ENCODE measurements at regions of chr12 and their contacts with region 1.

Region 1: GRCh38 chr12:107093417-107094182 is at the start of gene CRY1:
- DNase-seq: peak; percentile 84
- ATAC-seq: peak; percentile 83
- H3K4me3 Mint-ChIP-seq: no peak within 1 kb of the TSS
- H3K27ac Mint-ChIP-seq: no peak within 1 kb of the TSS
- H3K4me1 Mint-ChIP-seq: peaks cover 6% of the 10 kb centered on the region
- H3K27me3 Mint-ChIP-seq: peaks cover 8% of the 10 kb centered on the region
- CTCF ChIP-seq: no peak
- total RNA-seq, gene CRY1: 4.6 and 7.1 TPM in 2 replicates

Region 2: DNA sequence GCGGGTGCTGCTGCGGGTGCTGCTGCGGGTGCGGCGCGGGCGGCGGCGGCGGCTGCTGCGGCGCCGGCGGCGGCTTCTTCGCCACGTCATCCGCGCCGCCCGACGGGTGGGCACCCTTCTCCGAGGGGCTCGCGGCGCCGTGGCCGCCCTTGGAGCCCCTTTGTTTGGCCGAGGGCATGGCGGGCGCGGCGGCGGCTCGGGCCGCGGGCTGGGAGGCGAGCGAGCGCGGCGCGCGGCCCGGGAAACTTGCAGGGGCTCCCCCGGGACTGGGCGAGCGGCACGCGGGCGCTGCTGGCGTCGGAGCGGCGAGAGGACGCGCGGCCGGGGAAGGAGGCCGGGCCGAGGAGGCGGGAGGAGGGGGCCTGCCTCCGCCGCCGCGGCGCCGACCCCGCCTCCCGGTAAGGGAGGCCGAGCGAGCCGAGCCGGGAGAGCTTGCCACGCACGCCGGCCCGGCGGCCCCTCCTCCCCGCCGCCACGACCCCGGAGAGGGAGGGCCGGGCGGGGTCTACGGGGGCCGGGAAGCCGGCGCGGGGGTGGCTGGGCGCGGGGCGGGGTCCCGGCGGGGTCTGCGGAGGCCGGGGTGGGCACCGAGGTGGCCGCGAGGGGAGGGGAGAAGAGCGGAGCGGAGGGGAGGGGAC is 845.8 kb before region 1 on chr12 and contains the start of gene CKAP4:
- CTCF ChIA-PET with region 1: no interaction called
- POLR2A ChIA-PET with region 1: no interaction called
- intact Hi-C with region 1: loop called (anchors 2 kb)
- DNase-seq: peak; percentile 73
- ATAC-seq: peak; percentile 71
- H3K4me3 Mint-ChIP-seq: peak within 1 kb of the TSS; percentile 82
- H3K27ac Mint-ChIP-seq: peak within 1 kb of the TSS; percentile 80
- H3K4me1 Mint-ChIP-seq: peaks cover 54% of the 10 kb centered on the region
- H3K27me3 Mint-ChIP-seq: no peaks in the 10 kb centered on the region
- CTCF ChIP-seq: no peak
- total RNA-seq, gene CKAP4: 15.9 and 17.1 TPM in 2 replicates

Region 3: DNA sequence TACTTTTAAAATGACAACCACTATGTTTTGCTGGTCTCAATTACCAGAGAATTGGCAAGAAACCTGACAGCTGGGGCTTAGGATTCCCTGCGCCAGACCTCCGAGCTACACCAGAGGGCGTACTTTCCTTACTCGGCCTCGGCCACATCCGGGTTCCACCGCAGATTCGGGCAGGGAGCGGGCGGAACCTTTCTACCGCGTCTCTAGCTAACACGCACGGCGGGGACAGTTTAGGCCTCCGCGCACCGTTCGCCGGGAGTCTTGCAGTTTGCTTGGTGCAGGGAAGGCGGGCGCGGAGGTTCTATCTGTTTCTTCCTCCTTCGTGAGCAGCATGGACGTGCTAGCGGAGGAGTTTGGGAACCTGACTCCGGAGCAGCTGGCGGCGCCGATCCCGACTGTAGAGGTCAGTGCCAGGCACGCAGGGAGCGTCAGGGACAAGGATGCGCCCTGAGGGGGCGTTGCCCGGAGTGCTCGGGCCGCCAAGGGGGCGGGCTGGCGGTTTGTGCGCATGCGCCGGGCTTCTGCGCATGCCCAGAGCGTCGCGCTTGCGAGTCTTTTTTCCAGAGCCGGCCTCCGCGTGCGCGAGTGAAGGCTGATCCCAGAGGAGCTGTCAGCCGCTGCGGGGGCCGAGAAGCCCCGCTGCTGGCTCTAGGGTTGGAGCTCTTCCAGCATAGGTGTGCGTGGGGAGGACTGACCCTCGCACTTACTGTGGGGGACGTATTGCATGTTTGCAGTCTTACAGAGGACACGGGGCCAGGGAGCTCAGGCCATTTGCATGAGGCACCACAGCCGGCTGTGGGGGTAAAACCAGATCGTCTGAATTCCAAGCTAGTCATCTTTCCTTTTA is 735.8 kb before region 1 on chr12 and contains the start of gene POLR3B:
- CTCF ChIA-PET with region 1: no interaction called
- POLR2A ChIA-PET with region 1: interaction called, 3 read pairs
- intact Hi-C with region 1: loop called (anchors 1 kb)
- DNase-seq: peak; percentile 96
- ATAC-seq: peak; percentile 92
- H3K4me3 Mint-ChIP-seq: peak within 1 kb of the TSS; percentile 95
- H3K27ac Mint-ChIP-seq: peak within 1 kb of the TSS; percentile 92
- H3K4me1 Mint-ChIP-seq: peaks cover 16% of the 10 kb centered on the region
- H3K27me3 Mint-ChIP-seq: no peaks in the 10 kb centered on the region
- CTCF ChIP-seq: peak; percentile 49
- total RNA-seq, gene POLR3B: 7.3 and 8.0 TPM in 2 replicates

Region 4: GRCh38 chr12:106955377-106956047 is 138.1 kb before region 1 on chr12 and contains the start of gene TMEM263:
- CTCF ChIA-PET with region 1: no interaction called
- POLR2A ChIA-PET with region 1: interaction called, 6 read pairs
- intact Hi-C with region 1: loop called (anchors 1 kb)
- DNase-seq: peak; percentile 91
- ATAC-seq: peak; percentile 86
- H3K4me3 Mint-ChIP-seq: peak within 1 kb of the TSS; percentile 96
- H3K27ac Mint-ChIP-seq: peak within 1 kb of the TSS; percentile 84
- H3K4me1 Mint-ChIP-seq: peaks cover 23% of the 10 kb centered on the region
- H3K27me3 Mint-ChIP-seq: no peaks in the 10 kb centered on the region
- CTCF ChIP-seq: no peak
- total RNA-seq, gene TMEM263: 10.5 and 15.1 TPM in 2 replicates

Region 5: DNA sequence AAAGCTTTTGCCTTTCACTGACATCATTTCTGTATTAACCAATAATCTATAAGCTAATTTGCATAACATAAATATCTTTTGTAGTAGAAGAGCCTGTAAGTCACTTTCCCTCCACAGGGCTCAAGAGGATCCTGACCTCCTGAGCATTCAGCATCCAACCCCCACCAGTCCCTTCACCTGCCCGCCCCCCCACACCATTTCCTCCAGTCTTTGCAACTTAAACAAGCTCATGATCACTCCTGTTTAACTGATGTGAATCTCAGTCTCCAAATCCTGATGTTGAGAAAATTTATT is 11.8 kb after region 1 on chr12:
- CTCF ChIA-PET with region 1: interaction called, 23 read pairs
- POLR2A ChIA-PET with region 1: interaction called, 3 read pairs
- intact Hi-C with region 1: loop called (anchors 1 kb)
- DNase-seq: no peak
- ATAC-seq: no peak
- H3K4me3 Mint-ChIP-seq: no peak overlapping the region
- H3K27ac Mint-ChIP-seq: no peak overlapping the region
- H3K4me1 Mint-ChIP-seq: peaks cover 2% of the 10 kb centered on the region
- H3K27me3 Mint-ChIP-seq: peaks cover 25% of the 10 kb centered on the region
- CTCF ChIP-seq: no peak

Region 6: GRCh38 chr12:107685360-107686248 is 592.0 kb after region 1 on chr12 and contains the start of gene PWP1:
- CTCF ChIA-PET with region 1: no interaction called
- POLR2A ChIA-PET with region 1: no interaction called
- intact Hi-C with region 1: loop called (anchors 1 kb)
- DNase-seq: peak; percentile 93
- ATAC-seq: peak; percentile 90
- H3K4me3 Mint-ChIP-seq: peak within 1 kb of the TSS; percentile 96
- H3K27ac Mint-ChIP-seq: peak within 1 kb of the TSS; percentile 97
- H3K4me1 Mint-ChIP-seq: peaks cover 23% of the 10 kb centered on the region
- H3K27me3 Mint-ChIP-seq: no peaks in the 10 kb centered on the region
- CTCF ChIP-seq: no peak
- total RNA-seq, gene PWP1: 49.4 and 53.5 TPM in 2 replicates

Measured in activated B cell treated with CpG ODN at 0.5 μM for 24 hours (primary cell).